Mammary epithelial cell (primary cell): ENCODE measurements at regions of chr2 and their contacts with region 1.

Region 1: GRCh38 chr2:33267756-33268155 is 208.7 kb upstream of the RASGRP3 start:
- DNase-seq: peak; percentile 6
- H3K4me3 ChIP-seq: no peak overlapping the region
- H3K27ac ChIP-seq: no peak overlapping the region
- H3K4me1 ChIP-seq: peaks cover 8% of the 10 kb centered on the region
- H3K27me3 ChIP-seq: no peaks in the 10 kb centered on the region
- CTCF ChIP-seq: peak in 1 of 2 donors; percentile 21

Region 2: GRCh38 chr2:32192418-32192817 is 1075.3 kb before region 1 on chr2:
- CTCF ChIA-PET with region 1: no interaction called
- dilution Hi-C with region 1: no loop called
- in situ Hi-C with region 1: no loop called
- intact Hi-C with region 1: no loop called
- DNase-seq: no peak
- H3K4me3 ChIP-seq: no peak overlapping the region
- H3K27ac ChIP-seq: no peak overlapping the region
- H3K4me1 ChIP-seq: peaks cover 12% of the 10 kb centered on the region
- H3K27me3 ChIP-seq: no peaks in the 10 kb centered on the region
- CTCF ChIP-seq: no peak

Region 3: DNA sequence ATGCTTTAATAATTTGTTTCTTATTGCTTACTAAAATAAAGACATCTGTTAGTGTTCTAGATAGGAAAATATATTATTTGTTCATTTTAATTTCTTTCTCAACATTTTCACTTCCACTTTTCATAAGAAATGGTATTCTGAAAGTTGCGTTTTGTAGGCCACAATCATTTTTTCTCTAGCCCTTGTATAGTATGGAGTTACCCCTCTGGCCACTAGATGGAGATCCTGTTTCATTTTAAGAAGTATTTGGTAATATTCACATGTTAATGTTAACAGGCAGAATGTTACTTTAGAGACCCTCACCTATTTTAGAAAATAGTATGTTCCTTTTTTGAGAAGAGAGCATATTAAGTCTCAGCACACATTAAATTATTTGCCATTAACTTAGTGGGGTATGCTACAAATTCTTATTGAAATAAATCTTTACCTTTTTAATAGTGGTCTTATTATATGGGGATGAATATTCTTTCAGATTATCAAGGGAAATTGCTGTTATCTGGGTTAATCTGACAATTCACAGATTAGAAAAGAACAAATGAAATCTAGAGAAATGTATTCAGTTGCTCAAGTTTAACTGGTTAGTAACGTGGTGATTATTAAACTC is 713.8 kb before region 1 on chr2:
- CTCF ChIA-PET with region 1: no interaction called
- dilution Hi-C with region 1: no loop called
- in situ Hi-C with region 1: no loop called
- intact Hi-C with region 1: loop called (anchors 10 kb)
- DNase-seq: peak; percentile 6
- H3K4me3 ChIP-seq: no peak overlapping the region
- H3K27ac ChIP-seq: no peak overlapping the region
- H3K4me1 ChIP-seq: no peaks in the 10 kb centered on the region
- H3K27me3 ChIP-seq: no peaks in the 10 kb centered on the region
- CTCF ChIP-seq: peak; percentile 53 to 72

Region 4: DNA sequence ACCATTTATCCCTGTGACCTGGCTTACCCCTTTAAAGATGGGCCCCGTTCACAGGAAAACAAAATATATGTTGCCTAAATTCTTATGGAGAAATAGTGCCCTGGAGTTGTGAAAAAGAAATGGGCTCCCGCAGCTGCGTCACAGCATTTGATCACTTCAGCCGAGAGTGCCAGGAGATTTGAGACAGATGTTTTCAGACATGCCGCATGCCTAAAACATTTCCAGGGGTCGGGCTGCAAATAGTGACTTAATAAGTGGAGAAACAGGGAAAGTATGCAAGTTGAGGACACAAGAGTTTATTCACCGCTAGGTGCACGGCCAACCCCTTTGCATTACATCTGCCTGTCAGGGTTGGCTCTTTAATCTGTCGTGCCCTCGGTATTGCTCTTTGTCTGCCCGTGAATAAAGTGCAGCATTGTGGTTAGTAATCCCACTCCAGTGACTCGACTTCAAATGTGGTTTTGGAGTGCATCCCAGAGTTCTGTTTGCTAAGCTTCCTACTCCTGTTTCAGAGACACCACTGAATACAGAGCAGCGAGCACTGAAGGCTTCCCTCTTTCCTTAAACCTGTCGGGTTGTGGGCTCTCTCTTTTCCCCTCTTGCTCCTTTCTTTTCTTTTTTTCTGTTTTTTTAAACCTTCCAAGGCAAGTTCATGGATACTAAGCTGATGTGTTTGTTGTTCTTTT is 133.5 kb before region 1 on chr2:
- CTCF ChIA-PET with region 1: no interaction called
- dilution Hi-C with region 1: no loop called
- in situ Hi-C with region 1: loop called in 1 of 2 experiments (anchors 25 kb)
- intact Hi-C with region 1: loop called (anchors 5 kb)
- DNase-seq: peak; percentile 96
- H3K4me3 ChIP-seq: peak overlapping the region; percentile 4 to 28 (median 14)
- H3K27ac ChIP-seq: peak overlapping the region; percentile 9
- H3K4me1 ChIP-seq: peaks cover 37% of the 10 kb centered on the region
- H3K27me3 ChIP-seq: no peaks in the 10 kb centered on the region
- CTCF ChIP-seq: peak; percentile 15 to 18

Region 5: GRCh38 chr2:33210626-33211025 is 57.1 kb before region 1 on chr2:
- CTCF ChIA-PET with region 1: interaction called, 3 read pairs
- dilution Hi-C with region 1: no loop called
- in situ Hi-C with region 1: no loop called
- intact Hi-C with region 1: loop called (anchors 1 kb)
- DNase-seq: peak; percentile 93
- H3K4me3 ChIP-seq: no peak overlapping the region
- H3K27ac ChIP-seq: peak overlapping the region; percentile 84
- H3K4me1 ChIP-seq: peaks cover 45% of the 10 kb centered on the region
- H3K27me3 ChIP-seq: no peaks in the 10 kb centered on the region
- CTCF ChIP-seq: no peak

Region 6: GRCh38 chr2:33246432-33246831 is 21.3 kb before region 1 on chr2:
- CTCF ChIA-PET with region 1: no interaction called
- dilution Hi-C with region 1: no loop called
- in situ Hi-C with region 1: no loop called
- intact Hi-C with region 1: no loop called
- DNase-seq: no peak
- H3K4me3 ChIP-seq: no peak overlapping the region
- H3K27ac ChIP-seq: no peak overlapping the region
- H3K4me1 ChIP-seq: peaks cover 5% of the 10 kb centered on the region
- H3K27me3 ChIP-seq: no peaks in the 10 kb centered on the region
- CTCF ChIP-seq: no peak

Region 7: DNA sequence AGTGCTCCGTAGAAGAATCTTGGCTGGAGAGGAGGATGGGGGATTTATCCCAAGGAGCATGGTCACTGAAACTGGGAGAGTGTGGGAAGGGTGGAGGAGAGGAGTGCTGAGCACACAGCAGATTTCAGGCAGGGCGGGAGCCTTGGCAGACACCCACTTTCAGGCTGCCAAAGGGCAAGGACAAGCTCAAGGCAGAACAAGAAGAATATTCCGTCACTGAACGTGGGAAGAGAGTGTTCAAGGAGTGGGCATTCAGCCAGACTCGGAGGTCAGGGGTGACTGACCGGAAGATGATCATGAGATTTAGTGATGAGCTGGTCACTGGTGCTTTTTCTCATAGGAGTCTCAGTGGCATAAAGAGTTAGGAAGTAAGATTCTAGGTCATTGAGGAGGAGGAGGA is 72.5 kb after region 1 on chr2:
- CTCF ChIA-PET with region 1: no interaction called
- dilution Hi-C with region 1: no loop called
- in situ Hi-C with region 1: no loop called
- intact Hi-C with region 1: no loop called
- DNase-seq: no peak
- H3K4me3 ChIP-seq: no peak overlapping the region
- H3K27ac ChIP-seq: no peak overlapping the region
- H3K4me1 ChIP-seq: no peaks in the 10 kb centered on the region
- H3K27me3 ChIP-seq: no peaks in the 10 kb centered on the region
- CTCF ChIP-seq: no peak

Region 8: DNA sequence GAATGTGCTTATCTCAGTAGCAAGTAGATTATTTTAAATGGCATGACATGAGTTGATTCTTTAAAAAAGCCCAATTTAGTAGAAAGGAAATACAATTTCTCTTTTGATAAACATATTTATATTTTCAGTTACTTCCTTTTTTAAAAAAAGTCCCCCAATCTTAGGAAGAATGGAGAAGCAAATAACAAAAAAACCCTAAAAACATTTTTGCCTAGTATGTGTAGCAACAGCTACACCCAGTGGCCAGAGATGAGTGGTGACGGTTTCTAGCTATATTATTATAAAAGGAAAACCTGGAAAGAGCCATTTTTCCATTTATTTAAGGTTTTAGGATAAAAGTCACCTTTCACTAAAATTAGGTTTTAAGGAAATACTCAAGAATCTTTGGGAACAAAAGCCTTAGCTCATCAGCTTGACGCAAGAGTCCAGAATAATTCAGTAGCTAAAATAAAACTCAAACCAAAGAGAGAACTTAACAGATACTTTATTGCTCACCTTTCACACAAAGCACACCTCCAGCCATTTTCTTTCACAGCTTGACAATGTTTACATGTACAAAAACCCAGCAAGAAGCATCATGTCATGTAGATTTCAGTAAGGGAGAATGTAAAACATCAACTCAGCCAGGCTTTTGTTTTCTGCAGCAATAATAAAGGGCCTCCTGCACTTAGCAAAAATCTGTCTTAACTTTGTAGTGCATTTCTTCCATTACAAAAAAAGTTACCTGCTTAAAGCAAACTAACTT is 315.6 kb after region 1 on chr2:
- CTCF ChIA-PET with region 1: no interaction called
- dilution Hi-C with region 1: no loop called
- in situ Hi-C with region 1: loop called in 1 of 2 experiments (anchors 25 kb)
- intact Hi-C with region 1: loop called (anchors 10 kb)
- DNase-seq: peak; percentile 7
- H3K4me3 ChIP-seq: no peak overlapping the region
- H3K27ac ChIP-seq: no peak overlapping the region
- H3K4me1 ChIP-seq: no peaks in the 10 kb centered on the region
- H3K27me3 ChIP-seq: no peaks in the 10 kb centered on the region
- CTCF ChIP-seq: peak; percentile 71 to 85